ENCODE measurements at regions of chr1 and their contacts with region 1.

Region 1: DNA sequence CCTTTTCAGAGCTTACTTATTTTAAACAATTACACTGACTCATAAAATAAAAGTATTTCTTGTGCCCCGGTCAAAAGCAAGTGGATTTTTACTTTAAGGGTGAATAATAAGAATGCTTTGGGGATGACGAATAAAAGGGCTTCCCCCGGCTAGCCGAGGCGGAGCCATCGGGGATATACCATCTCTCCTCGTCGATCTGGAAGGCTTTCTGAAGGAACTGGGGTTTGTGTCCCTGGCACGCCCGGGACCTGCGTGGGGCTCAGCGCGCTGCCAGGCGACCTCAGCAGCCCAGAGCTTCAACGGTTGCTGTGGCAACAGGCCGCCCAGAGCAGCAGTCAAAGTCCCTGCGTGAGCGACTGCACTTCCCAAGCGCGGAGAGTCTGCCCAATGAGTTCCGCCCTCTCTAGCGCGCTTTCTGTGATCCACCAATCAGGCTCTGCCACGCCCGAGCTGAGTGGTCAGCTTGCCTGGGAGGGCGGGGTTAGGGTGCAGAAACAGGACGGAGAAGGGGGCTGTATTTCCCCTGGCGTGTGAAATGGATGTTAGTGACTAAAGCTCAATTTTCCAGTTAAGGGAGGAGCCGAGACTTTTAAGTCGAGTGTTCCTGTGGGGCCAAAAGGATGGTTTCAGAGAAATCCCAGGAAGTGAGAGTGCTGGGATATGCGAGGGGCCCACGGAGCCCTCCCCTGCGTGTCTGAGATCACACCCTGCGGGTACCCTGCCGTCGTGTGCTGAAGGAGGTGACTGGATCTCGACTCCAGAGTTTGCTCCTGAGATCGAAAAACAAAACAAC is 33.0 kb upstream of the MGST3 start:
- DNase-seq: peak; percentile 99
- H3K4me3 ChIP-seq: peak overlapping the region; percentile 4 to 62 (median 58)
- H3K27ac ChIP-seq: peak overlapping the region; percentile 87
- H3K4me1 ChIP-seq: peaks cover 10% of the 10 kb centered on the region
- H3K27me3 ChIP-seq: peaks cover 11 to 19% of the 10 kb centered on the region in 2 experiments
- CTCF ChIP-seq: no peak
- POLR2A ChIP-seq: no peak

Region 2: DNA sequence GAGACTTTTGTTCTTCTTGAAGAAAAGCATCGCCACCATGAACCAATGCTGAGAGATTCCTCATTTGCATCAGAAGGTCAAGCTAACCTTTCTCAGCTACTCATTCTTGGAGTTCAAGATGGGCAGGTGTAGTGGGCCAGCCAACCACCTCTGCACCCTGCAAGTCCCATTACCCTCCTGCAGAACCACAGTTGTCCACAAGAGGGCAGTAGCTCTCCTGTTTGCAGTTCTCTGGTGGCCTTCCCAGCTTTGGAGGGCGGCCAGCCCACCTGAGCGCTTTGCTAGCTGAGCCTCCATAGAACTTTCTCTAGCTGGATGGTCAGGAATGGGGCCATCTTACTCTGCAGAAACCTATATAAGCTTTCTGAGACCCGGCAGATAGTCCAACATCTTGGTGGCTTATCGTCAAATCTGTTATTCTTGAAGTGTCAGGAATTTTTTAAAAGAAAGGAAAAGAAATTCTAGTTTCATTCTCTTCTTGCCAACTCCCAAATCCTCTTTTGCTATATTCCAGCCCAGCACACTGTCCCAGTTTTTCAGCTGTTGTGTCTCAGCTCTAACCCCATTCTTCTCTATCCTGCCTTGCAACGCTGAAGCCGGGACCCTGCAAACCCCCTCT is 230.6 kb before region 1 on chr1:
- CTCF ChIA-PET with region 1: interaction called, 61 read pairs
- POLR2A ChIA-PET with region 1: no interaction called
- dilution Hi-C with region 1: no loop called
- intact Hi-C with region 1: loop called (anchors 1 kb)
- DNase-seq: peak; percentile 69
- H3K4me3 ChIP-seq: no peak overlapping the region
- H3K27ac ChIP-seq: no peak overlapping the region
- H3K4me1 ChIP-seq: no peaks in the 10 kb centered on the region
- H3K27me3 ChIP-seq: peaks cover 5 to 14% of the 10 kb centered on the region in 2 experiments
- CTCF ChIP-seq: peak; percentile 88 to 96
- POLR2A ChIP-seq: no peak

Region 3: GRCh38 chr1:165392634-165393571 is 205.2 kb before region 1 on chr1:
- CTCF ChIA-PET with region 1: interaction called, 376 read pairs
- POLR2A ChIA-PET with region 1: no interaction called
- dilution Hi-C with region 1: no loop called
- intact Hi-C with region 1: loop called (anchors 1 kb)
- DNase-seq: peak; percentile 67
- H3K4me3 ChIP-seq: no peak overlapping the region
- H3K27ac ChIP-seq: no peak overlapping the region
- H3K4me1 ChIP-seq: peaks cover 8% of the 10 kb centered on the region
- H3K27me3 ChIP-seq: peaks cover 19 to 32% of the 10 kb centered on the region in 2 experiments
- CTCF ChIP-seq: peak; percentile 90 to 92
- POLR2A ChIP-seq: no peak

Region 4: DNA sequence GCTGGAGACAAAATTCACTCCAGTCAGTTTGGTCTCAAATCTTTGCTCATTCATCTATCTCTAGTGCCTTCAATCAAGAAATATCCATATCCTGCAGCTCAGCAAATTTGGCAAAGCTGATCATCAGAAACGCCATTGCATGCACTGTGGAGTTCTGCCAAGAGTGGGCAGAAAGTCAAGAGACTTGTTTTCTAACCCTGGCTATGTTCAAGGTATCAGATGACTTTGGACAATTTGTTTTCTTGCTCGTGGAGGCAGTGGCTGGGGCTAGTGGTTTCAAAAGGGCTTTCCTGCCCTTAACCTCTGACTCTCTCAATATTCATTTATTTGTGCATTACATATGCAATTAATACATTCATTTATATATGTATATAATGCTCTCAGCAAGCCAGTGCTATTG is 67.1 kb before region 1 on chr1:
- CTCF ChIA-PET with region 1: no interaction called
- POLR2A ChIA-PET with region 1: no interaction called
- dilution Hi-C with region 1: no loop called
- intact Hi-C with region 1: no loop called
- DNase-seq: no peak
- H3K4me3 ChIP-seq: no peak overlapping the region
- H3K27ac ChIP-seq: no peak overlapping the region
- H3K4me1 ChIP-seq: no peaks in the 10 kb centered on the region
- H3K27me3 ChIP-seq: no peaks in the 10 kb centered on the region
- CTCF ChIP-seq: no peak
- POLR2A ChIP-seq: no peak

Region 5: DNA sequence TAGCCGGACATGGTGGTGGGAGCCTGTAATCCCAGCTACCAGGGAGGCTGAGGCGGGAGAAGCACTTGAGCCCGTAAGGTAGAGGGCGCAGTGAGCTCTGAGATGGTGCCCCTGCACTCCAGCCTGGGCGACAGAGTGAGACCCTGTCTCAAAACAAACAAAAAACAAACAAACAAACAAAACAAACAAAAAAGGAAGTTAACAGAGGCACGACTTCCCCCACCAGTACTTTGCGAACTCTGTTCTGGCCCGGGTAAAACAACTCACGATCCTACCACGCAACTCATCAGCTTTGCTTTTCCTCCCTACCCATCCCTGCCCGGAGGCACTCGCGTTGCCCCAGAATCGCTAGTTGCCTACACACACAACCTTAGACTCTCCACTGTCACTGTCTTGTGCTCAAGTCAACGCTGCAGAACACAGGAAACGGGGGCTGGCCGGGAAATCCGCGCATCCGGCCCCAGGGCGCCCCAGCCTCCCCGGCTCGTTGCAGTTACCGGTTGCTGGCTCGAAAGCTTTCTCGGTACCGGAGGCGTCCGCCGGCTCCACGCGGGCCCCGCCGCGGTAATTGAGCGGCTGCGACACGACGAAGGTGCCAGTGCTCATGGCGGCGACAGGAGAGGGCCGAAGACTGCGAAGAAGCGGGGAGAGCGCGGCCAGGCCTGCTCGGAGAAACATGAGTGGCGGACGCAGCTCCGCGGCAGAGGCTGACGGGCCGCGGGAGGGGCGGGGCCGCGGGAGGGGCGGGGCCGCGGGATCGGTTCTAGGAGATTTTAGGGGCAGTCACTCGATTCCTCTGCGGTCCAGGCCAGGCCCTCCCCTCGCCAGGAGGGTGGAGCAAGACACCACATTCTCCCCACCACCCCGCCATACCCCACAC is 100.0 kb after region 1 on chr1 and contains the start of gene ALDH9A1:
- CTCF ChIA-PET with region 1: interaction called, 9 read pairs
- POLR2A ChIA-PET with region 1: no interaction called
- dilution Hi-C with region 1: no loop called
- intact Hi-C with region 1: loop called (anchors 1 kb)
- DNase-seq: peak; percentile 84
- H3K4me3 ChIP-seq: peak within 1 kb of the TSS; percentile 36 to 75 (median 55)
- H3K27ac ChIP-seq: peak within 1 kb of the TSS; percentile 72
- H3K4me1 ChIP-seq: peaks cover 21% of the 10 kb centered on the region
- H3K27me3 ChIP-seq: peaks cover 2 to 3% of the 10 kb centered on the region in 2 experiments
- CTCF ChIP-seq: peak in 1 of 2 donors; percentile 30
- POLR2A ChIP-seq: peak; percentile 82
- total RNA-seq, gene ALDH9A1: 41.4 and 47.4 TPM in 2 replicates

Region 6: DNA sequence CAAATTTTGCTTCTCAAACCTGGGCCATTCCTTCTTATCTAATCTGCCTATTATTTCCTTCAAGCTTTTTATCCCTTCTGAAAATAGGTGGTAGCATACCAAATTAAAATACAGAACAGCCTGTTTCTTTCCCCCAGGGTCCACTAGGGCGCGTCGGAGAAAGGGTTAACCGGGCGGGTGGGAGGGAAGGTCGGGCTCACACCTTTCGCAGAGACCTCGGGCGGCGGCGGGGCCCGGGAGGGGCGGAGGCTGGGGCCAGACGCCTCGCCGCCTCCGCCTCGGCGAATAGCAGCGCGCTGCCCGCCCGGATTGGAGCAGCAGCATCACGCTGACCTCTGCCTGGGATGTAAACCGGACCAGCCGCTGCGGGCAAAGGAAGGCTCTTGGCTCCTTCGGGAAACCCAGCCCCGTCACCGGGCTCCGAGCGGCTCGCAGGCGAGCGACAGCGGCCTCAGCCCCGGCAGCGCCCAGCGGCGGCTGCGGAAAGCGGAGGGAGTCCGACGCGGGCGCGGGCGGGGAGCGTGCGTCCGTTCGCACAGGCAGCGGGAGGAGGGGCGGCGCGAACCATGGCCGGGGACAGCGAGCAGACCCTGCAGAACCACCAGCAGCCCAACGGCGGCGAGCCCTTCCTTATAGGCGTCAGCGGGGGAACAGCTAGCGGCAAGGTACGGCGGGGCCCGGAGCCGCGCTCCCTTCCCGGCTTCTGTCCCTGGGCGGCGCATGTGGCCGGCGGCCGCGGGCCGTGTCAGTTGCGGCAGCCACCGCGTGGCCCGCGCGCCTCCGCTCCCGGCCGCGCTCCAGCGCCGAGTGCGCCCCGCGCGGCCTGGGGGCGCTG is 229.4 kb after region 1 on chr1 and contains the start of gene UCK2:
- CTCF ChIA-PET with region 1: interaction called, 10 read pairs
- POLR2A ChIA-PET with region 1: no interaction called
- dilution Hi-C with region 1: no loop called
- intact Hi-C with region 1: loop called (anchors 1 kb)
- DNase-seq: peak; percentile 81
- H3K4me3 ChIP-seq: peak within 1 kb of the TSS; percentile 77 to 93 (median 86)
- H3K27ac ChIP-seq: peak within 1 kb of the TSS; percentile 95
- H3K4me1 ChIP-seq: peaks cover 13% of the 10 kb centered on the region
- H3K27me3 ChIP-seq: no peaks in the 10 kb centered on the region
- CTCF ChIP-seq: peak in 1 of 2 donors; percentile 29
- POLR2A ChIP-seq: peak; percentile 49
- total RNA-seq, gene UCK2: 62.3 and 68.4 TPM in 2 replicates

Region 7: GRCh38 chr1:166166695-166167571 is 568.9 kb after region 1 on chr1 and contains the start of gene FAM78B:
- CTCF ChIA-PET with region 1: no interaction called
- POLR2A ChIA-PET with region 1: no interaction called
- dilution Hi-C with region 1: no loop called
- intact Hi-C with region 1: loop called (anchors 10 kb)
- DNase-seq: peak; percentile 31
- H3K4me3 ChIP-seq: peak within 1 kb of the TSS in 1 of 3 experiments; percentile 53
- H3K27ac ChIP-seq: no peak within 1 kb of the TSS
- H3K4me1 ChIP-seq: peaks cover 6% of the 10 kb centered on the region
- H3K27me3 ChIP-seq: peaks cover 17 to 21% of the 10 kb centered on the region in 2 experiments
- CTCF ChIP-seq: no peak
- POLR2A ChIP-seq: no peak
- total RNA-seq, gene FAM78B: not detected in 2 replicates